ENCODE measurements at regions of chr16 and their contacts with region 1.

Region 1: GRCh38 chr16:11806721-11807120 is 9.7 kb upstream of the ZC3H7A start:
- DNase-seq: no peak
- H3K4me3 Mint-ChIP-seq: no peak overlapping the region
- H3K27ac Mint-ChIP-seq: no peak overlapping the region
- H3K4me1 Mint-ChIP-seq: peaks cover 7% of the 10 kb centered on the region
- H3K27me3 Mint-ChIP-seq: no peaks in the 10 kb centered on the region

Region 2: DNA sequence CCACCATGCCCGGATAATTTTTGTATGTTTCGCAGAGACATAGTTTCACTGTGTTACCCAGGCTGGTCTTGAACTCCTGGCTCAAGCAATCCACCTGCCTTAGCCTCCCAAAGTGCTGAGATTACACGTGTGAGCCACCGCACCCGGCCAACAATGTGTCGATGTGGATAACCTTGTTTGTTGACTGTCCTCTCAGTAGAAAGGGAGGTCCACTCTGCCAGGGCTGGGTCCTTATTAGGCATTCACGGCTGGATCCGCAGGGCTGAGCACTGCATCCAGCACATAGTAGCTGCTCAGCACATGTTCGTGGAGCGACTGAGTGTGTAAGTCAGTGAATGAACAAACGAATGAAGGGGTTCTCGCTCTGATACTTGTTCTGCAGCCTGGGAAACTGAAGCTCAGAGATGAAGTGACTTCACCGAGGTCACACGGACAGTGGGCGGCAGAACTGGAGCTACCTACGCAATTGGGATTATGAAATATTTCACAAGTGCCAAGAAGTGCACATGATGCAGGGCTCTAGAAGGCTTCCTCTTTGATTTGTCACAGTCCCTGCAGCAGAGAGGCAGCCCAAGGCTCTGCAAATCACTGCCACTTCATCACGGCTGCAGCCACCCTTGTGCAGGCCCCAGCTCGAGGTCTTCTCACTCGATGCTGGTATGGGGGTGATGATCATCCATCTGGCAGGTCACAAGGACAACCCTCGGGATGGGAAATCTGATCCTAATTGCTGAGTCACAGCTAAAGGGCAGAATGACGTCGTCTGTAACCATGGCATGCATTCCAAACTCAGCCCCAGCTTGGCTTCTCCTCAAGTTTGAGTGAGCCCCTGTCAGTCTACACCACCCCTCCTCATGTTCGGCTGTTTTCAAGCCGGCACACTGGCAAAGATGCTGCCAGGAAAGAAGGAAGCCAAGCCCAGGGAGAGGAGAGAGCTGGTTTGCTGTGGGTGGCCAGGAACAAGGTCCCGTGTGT is 166.5 kb before region 1 on chr16:
- CTCF ChIA-PET with region 1: no interaction called
- POLR2A ChIA-PET with region 1: no interaction called
- intact Hi-C with region 1: loop called (anchors 5 kb)
- DNase-seq: no peak
- H3K4me3 Mint-ChIP-seq: no peak overlapping the region
- H3K27ac Mint-ChIP-seq: no peak overlapping the region
- H3K4me1 Mint-ChIP-seq: peaks cover 5% of the 10 kb centered on the region
- H3K27me3 Mint-ChIP-seq: no peaks in the 10 kb centered on the region

Region 3: GRCh38 chr16:11698271-11698689 is 108.4 kb before region 1 on chr16:
- CTCF ChIA-PET with region 1: no interaction called
- POLR2A ChIA-PET with region 1: no interaction called
- intact Hi-C with region 1: loop called (anchors 5 kb)
- DNase-seq: peak; percentile 62
- H3K4me3 Mint-ChIP-seq: no peak overlapping the region
- H3K27ac Mint-ChIP-seq: peak overlapping the region; percentile 66
- H3K4me1 Mint-ChIP-seq: peaks cover 54% of the 10 kb centered on the region
- H3K27me3 Mint-ChIP-seq: no peaks in the 10 kb centered on the region

Region 4: GRCh38 chr16:11783319-11784037 is 23.2 kb before region 1 on chr16:
- CTCF ChIA-PET with region 1: no interaction called
- POLR2A ChIA-PET with region 1: no interaction called
- intact Hi-C with region 1: loop called (anchors 1 kb)
- DNase-seq: peak; percentile 61
- H3K4me3 Mint-ChIP-seq: peak overlapping the region; percentile 78
- H3K27ac Mint-ChIP-seq: peak overlapping the region; percentile 100
- H3K4me1 Mint-ChIP-seq: peaks cover 68% of the 10 kb centered on the region
- H3K27me3 Mint-ChIP-seq: no peaks in the 10 kb centered on the region

Region 5: DNA sequence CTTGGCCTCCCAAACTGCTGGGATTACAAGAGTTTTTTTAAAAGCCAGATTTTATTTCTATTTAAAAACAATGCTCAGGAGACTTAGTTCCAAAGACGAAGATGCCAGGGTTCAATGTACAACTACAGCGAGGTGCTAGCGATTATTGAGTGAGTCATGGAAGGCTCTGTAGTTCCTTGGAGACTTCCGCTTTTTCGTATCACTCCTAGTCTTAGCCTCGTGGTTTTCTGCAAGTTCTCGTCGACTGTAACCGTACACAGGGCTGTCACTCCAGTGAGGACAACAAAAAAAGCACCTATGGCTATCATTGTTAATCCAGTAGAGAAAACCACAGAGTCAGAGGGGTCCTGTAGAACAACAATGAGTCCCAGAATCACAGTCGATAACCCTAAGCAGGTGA is 13.1 kb after region 1 on chr16:
- CTCF ChIA-PET with region 1: no interaction called
- POLR2A ChIA-PET with region 1: no interaction called
- intact Hi-C with region 1: no loop called
- DNase-seq: no peak
- H3K4me3 Mint-ChIP-seq: no peak overlapping the region
- H3K27ac Mint-ChIP-seq: no peak overlapping the region
- H3K4me1 Mint-ChIP-seq: no peaks in the 10 kb centered on the region
- H3K27me3 Mint-ChIP-seq: no peaks in the 10 kb centered on the region